CD4-positive, alpha-beta T cell (primary cell): ENCODE measurements at regions of chr10 and their contacts with region 1.

Region 1: GRCh38 chr10:114526504-114527238 is 122.4 kb upstream of the AFAP1L2 start:
- DNase-seq: peak; percentile 84 to 97 (median 88)
- ATAC-seq: peak; percentile 88
- H3K4me3 ChIP-seq: peak overlapping the region; percentile 73
- H3K4me3 Mint-ChIP-seq: peak overlapping the region; percentile 99
- H3K27ac ChIP-seq: peak overlapping the region; percentile 71 to 95
- H3K27ac Mint-ChIP-seq: peak overlapping the region; percentile 96
- H3K4me1 ChIP-seq: peaks cover 57% of the 10 kb centered on the region
- H3K4me1 Mint-ChIP-seq: peaks cover 73% of the 10 kb centered on the region
- H3K27me3 ChIP-seq: no peaks in the 10 kb centered on the region
- H3K27me3 Mint-ChIP-seq: no peaks in the 10 kb centered on the region
- CTCF ChIP-seq: no peak

Region 2: DNA sequence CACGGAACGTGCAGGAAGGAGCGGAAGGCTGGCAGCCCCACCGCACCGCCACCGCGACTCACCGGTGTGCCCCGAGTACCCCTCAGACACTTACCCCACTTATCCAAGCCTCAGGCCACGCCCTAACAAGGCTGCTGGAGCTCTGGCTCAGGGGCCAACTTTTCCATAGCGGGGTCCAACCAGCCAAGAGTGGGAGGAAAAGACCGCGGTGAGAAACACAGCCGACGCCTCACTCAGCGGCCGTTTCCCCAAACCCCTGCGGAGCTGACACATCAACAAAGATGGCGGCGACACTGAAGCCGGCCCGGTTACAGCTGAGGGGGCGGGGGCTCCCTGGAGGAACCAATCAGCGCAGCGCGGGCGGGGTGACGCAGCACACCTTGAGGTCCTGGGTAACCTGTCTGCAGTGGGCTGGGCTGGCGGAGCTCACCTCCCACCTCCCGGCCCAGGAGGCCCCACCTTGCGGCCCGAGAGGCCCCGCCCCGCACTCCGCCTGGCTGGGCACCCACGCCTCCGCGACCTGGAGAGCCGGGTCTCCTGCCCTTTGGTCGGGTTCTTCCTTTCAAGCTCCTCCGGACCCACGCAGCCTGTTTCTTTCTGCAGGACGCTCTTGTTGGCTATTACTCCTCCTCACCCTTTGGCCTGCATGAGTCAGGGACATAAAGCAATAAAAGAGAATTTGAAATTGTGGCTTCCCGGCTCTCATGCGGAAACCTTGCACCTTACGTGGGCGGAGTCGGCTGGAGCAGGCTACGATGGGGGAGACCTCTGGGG is 352.6 kb before region 1 on chr10 and contains the start of gene CCDC186:
- CTCF ChIA-PET with region 1: no interaction called
- POLR2A ChIA-PET with region 1: interaction called, 4 read pairs
- intact Hi-C with region 1: loop called in 1 of 2 experiments (anchors 10 kb)
- DNase-seq: peak; percentile 95 to 99 (median 98)
- ATAC-seq: peak; percentile 97
- H3K4me3 ChIP-seq: peak within 1 kb of the TSS; percentile 79
- H3K4me3 Mint-ChIP-seq: peak within 1 kb of the TSS; percentile 93
- H3K27ac ChIP-seq: peak within 1 kb of the TSS; percentile 78 to 84
- H3K27ac Mint-ChIP-seq: peak within 1 kb of the TSS; percentile 90
- H3K4me1 ChIP-seq: peaks cover 5% of the 10 kb centered on the region
- H3K4me1 Mint-ChIP-seq: peaks cover 61% of the 10 kb centered on the region
- H3K27me3 ChIP-seq: no peaks in the 10 kb centered on the region
- H3K27me3 Mint-ChIP-seq: no peaks in the 10 kb centered on the region
- CTCF ChIP-seq: no peak
- total RNA-seq, gene CCDC186: 55.0 to 55.9 TPM

Region 3: GRCh38 chr10:114256822-114257221 is 269.8 kb before region 1 on chr10:
- CTCF ChIA-PET with region 1: no interaction called
- POLR2A ChIA-PET with region 1: no interaction called
- intact Hi-C with region 1: no loop called
- DNase-seq: no peak
- ATAC-seq: no peak
- H3K4me3 ChIP-seq: no peak overlapping the region
- H3K4me3 Mint-ChIP-seq: no peak overlapping the region
- H3K27ac ChIP-seq: no peak overlapping the region
- H3K27ac Mint-ChIP-seq: no peak overlapping the region
- H3K4me1 ChIP-seq: no peaks in the 10 kb centered on the region
- H3K4me1 Mint-ChIP-seq: peaks cover 7% of the 10 kb centered on the region
- H3K27me3 ChIP-seq: no peaks in the 10 kb centered on the region
- H3K27me3 Mint-ChIP-seq: no peaks in the 10 kb centered on the region
- CTCF ChIP-seq: no peak

Region 4: GRCh38 chr10:114492351-114493037 is 34.2 kb before region 1 on chr10:
- CTCF ChIA-PET with region 1: interaction called, 4 read pairs
- POLR2A ChIA-PET with region 1: interaction called, 66 read pairs
- intact Hi-C with region 1: loop called in 1 of 2 experiments (anchors 1 kb)
- DNase-seq: peak in 4 of 14 experiments; percentile 40 to 69 (median 54)
- ATAC-seq: peak; percentile 54
- H3K4me3 ChIP-seq: no peak overlapping the region
- H3K4me3 Mint-ChIP-seq: peak overlapping the region; percentile 74
- H3K27ac ChIP-seq: peak overlapping the region in 1 of 2 donors; percentile 16
- H3K27ac Mint-ChIP-seq: peak overlapping the region; percentile 66
- H3K4me1 ChIP-seq: peaks cover 42% of the 10 kb centered on the region
- H3K4me1 Mint-ChIP-seq: peaks cover 78% of the 10 kb centered on the region
- H3K27me3 ChIP-seq: no peaks in the 10 kb centered on the region
- H3K27me3 Mint-ChIP-seq: no peaks in the 10 kb centered on the region
- CTCF ChIP-seq: no peak

Region 5: GRCh38 chr10:114504769-114505579 is 21.7 kb before region 1 on chr10:
- CTCF ChIA-PET with region 1: no interaction called
- POLR2A ChIA-PET with region 1: interaction called, 66 read pairs
- intact Hi-C with region 1: no loop called
- DNase-seq: no peak
- ATAC-seq: no peak
- H3K4me3 ChIP-seq: no peak overlapping the region
- H3K4me3 Mint-ChIP-seq: peak overlapping the region; percentile 21
- H3K27ac ChIP-seq: no peak overlapping the region
- H3K27ac Mint-ChIP-seq: peak overlapping the region; percentile 47
- H3K4me1 ChIP-seq: peaks cover 66% of the 10 kb centered on the region
- H3K4me1 Mint-ChIP-seq: peaks cover 96% of the 10 kb centered on the region
- H3K27me3 ChIP-seq: no peaks in the 10 kb centered on the region
- H3K27me3 Mint-ChIP-seq: no peaks in the 10 kb centered on the region
- CTCF ChIP-seq: no peak

Region 6: DNA sequence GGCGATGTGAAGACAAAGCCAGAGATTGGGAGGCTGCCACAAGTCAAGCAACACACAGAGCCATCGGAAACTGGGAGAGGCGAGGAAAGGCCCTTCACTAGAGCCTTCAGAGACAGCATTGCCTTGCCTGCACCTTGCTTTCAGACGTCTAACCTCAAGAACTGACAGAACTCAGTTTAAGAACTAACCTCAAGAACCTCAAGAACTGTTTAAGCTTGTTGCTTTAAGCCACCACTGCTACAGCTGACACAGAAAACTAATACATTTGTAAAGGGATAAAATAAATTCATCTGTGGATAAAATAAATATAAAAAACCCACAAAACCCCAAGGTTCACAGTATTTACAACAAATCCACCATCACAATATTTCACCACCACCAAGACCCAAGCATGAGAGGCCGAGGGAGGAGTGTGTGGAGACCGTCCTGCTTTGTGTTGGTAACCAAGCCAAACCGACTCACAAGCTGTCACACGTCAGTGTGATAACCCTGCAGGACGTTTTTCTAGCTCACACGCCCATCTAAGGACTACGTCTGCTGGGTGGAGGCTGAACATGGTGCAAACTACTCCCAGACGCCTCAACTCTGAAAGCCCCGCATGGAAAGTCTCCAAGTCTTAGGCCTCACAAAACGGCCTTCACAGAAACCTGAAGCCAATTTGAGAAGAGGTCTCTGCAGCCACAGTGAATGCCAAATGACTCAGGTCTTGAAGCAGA is 14.6 kb after region 1 on chr10:
- CTCF ChIA-PET with region 1: interaction called, 44 read pairs
- POLR2A ChIA-PET with region 1: interaction called, 475 read pairs
- intact Hi-C with region 1: loop called (anchors 1 kb)
- DNase-seq: peak; percentile 58 to 93 (median 68)
- ATAC-seq: peak; percentile 76
- H3K4me3 ChIP-seq: peak overlapping the region; percentile 8
- H3K4me3 Mint-ChIP-seq: peak overlapping the region; percentile 50
- H3K27ac ChIP-seq: peak overlapping the region; percentile 86 to 92
- H3K27ac Mint-ChIP-seq: peak overlapping the region; percentile 96
- H3K4me1 ChIP-seq: peaks cover 92% of the 10 kb centered on the region
- H3K4me1 Mint-ChIP-seq: peaks cover 96% of the 10 kb centered on the region
- H3K27me3 ChIP-seq: no peaks in the 10 kb centered on the region
- H3K27me3 Mint-ChIP-seq: no peaks in the 10 kb centered on the region
- CTCF ChIP-seq: no peak

Region 7: GRCh38 chr10:114556236-114557122 is 29.8 kb after region 1 on chr10:
- CTCF ChIA-PET with region 1: no interaction called
- POLR2A ChIA-PET with region 1: no interaction called
- intact Hi-C with region 1: no loop called
- DNase-seq: no peak
- ATAC-seq: no peak
- H3K4me3 ChIP-seq: no peak overlapping the region
- H3K4me3 Mint-ChIP-seq: no peak overlapping the region
- H3K27ac ChIP-seq: no peak overlapping the region
- H3K27ac Mint-ChIP-seq: no peak overlapping the region
- H3K4me1 ChIP-seq: no peaks in the 10 kb centered on the region
- H3K4me1 Mint-ChIP-seq: no peaks in the 10 kb centered on the region
- H3K27me3 ChIP-seq: no peaks in the 10 kb centered on the region
- H3K27me3 Mint-ChIP-seq: no peaks in the 10 kb centered on the region
- CTCF ChIP-seq: no peak

Region 8: GRCh38 chr10:114995468-114996247 is 469.0 kb after region 1 on chr10:
- CTCF ChIA-PET with region 1: no interaction called
- POLR2A ChIA-PET with region 1: no interaction called
- intact Hi-C with region 1: no loop called
- DNase-seq: no peak
- ATAC-seq: no peak
- H3K4me3 ChIP-seq: no peak overlapping the region
- H3K4me3 Mint-ChIP-seq: no peak overlapping the region
- H3K27ac ChIP-seq: no peak overlapping the region
- H3K27ac Mint-ChIP-seq: no peak overlapping the region
- H3K4me1 ChIP-seq: no peaks in the 10 kb centered on the region
- H3K4me1 Mint-ChIP-seq: no peaks in the 10 kb centered on the region
- H3K27me3 ChIP-seq: no peaks in the 10 kb centered on the region
- H3K27me3 Mint-ChIP-seq: no peaks in the 10 kb centered on the region
- CTCF ChIP-seq: no peak